Sigmoid colon (tissue), 7 donors: ENCODE measurements at regions of chr7 and their contacts with region 1.

Region 1: DNA sequence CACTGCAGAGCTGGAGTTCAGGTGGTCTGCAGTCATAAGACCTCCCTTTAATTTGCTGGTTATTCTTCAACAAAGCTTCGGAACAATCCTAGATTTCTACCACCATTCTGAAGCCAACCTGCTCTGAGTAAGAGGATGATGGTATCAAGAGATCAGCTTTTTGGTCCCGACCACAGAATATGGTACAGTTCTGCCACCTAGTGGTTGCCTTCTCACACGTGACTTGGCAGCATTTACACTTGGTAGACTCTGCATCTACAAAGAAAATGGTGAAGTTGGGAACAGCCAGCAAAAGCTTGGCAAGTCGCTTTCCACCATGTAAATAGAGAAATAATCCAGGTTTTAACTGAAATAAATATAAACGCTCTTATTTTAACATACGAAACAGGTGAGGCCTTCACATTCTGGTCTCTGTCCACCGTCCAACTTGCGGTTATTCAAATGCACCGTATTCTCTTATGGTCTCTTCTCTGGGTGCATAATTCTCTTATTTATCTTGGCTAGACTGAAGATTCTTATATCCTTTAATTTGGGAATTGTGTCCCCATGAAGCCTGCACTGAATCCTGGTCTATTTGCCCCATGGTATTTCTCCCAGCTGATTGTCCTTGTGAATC is 173.9 kb upstream of the GRM3 start:
- DNase-seq: peak; percentile 61
- H3K4me3 ChIP-seq: no peak overlapping the region
- H3K27ac ChIP-seq: no peak overlapping the region
- H3K4me1 ChIP-seq: no peaks in the 10 kb centered on the region
- H3K27me3 ChIP-seq: no peaks in the 10 kb centered on the region
- CTCF ChIP-seq: peak; percentile 19 to 55 (median 34)
- EP300 ChIP-seq: no peak
- POLR2A ChIP-seq: no peak

Region 2: DNA sequence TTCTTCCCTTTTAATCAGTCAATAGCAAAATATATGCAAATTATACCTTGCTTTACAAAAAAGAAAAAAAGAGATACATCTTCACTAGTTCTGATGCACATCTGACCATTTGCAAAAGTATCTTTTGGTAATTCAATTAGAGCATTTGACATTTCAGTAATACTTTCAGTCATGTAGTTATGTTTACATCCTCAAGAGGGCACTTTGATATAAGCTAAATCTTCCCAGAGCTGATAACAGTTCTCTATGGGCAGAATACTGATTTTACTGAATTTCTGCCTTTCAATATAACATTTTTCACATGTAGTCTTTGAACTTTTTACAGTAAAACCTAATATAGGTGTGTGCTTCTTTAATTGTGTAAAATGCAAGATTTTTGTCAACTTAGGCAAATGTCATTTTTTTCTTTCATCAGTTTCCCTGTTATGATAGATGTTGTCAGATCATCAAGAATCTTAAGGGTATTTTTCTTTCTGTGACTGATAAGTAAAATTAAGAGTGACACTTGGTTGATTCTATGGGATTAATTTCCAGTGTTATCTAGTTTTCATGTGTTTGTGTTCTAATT is 579.5 kb before region 1 on chr7:
- intact Hi-C with region 1: loop called (anchors 2 kb)
- DNase-seq: no peak
- H3K4me3 ChIP-seq: no peak overlapping the region
- H3K27ac ChIP-seq: no peak overlapping the region
- H3K4me1 ChIP-seq: no peaks in the 10 kb centered on the region
- H3K27me3 ChIP-seq: no peaks in the 10 kb centered on the region
- CTCF ChIP-seq: peak in 1 of 4 experiments; percentile 26
- EP300 ChIP-seq: no peak
- POLR2A ChIP-seq: no peak